ENCODE measurements at regions of chr7 and their contacts with region 1.

Region 1: DNA sequence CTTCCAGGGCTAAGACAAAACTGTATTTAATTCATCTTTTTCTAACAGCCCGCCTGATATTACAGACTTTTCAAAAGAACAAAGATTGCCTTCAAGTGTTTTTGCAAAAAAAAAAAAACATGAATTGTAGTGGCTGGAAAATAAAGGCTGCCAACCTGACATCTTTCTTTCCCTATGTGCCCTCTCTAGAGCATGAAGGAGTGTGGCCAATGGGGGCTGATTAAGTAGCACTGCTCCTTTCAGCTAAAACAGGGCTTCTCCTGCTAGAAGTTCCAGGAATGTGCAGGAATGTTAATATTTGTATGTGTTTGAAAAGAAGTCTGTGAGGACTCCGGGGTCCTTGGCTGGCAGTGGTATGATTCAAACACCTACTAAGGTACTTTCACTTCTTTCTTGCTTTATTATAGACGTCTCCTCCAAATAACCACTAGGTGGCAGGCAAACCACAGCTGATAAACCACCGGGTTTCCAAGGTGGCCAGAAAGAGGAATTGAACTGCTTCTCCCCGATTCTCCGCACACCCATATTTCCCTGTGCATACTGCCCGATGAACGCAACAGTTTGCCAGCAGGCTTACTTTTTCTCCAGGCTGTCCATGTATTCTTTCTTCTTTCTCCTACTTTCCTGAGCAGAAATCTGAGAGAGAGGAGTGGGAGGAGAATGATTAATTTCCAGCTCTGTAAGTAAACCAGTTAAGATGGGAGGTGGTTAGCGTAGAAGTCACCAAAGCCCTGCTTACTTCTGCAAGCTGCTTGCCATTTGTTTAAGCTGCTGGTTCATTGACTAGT is 56.8 kb upstream of the DGKI start:
- DNase-seq: peak; percentile 73
- H3K4me3 Mint-ChIP-seq: no peak overlapping the region
- H3K27ac Mint-ChIP-seq: peak overlapping the region; percentile 66
- H3K4me1 Mint-ChIP-seq: peaks cover 17% of the 10 kb centered on the region
- H3K27me3 Mint-ChIP-seq: no peaks in the 10 kb centered on the region

Region 2: GRCh38 chr7:137475966-137476365 is 427.6 kb before region 1 on chr7:
- CTCF ChIA-PET with region 1: no interaction called
- POLR2A ChIA-PET with region 1: no interaction called
- DNase-seq: no peak
- H3K4me3 Mint-ChIP-seq: no peak overlapping the region
- H3K27ac Mint-ChIP-seq: no peak overlapping the region
- H3K4me1 Mint-ChIP-seq: no peaks in the 10 kb centered on the region
- H3K27me3 Mint-ChIP-seq: no peaks in the 10 kb centered on the region

Region 3: DNA sequence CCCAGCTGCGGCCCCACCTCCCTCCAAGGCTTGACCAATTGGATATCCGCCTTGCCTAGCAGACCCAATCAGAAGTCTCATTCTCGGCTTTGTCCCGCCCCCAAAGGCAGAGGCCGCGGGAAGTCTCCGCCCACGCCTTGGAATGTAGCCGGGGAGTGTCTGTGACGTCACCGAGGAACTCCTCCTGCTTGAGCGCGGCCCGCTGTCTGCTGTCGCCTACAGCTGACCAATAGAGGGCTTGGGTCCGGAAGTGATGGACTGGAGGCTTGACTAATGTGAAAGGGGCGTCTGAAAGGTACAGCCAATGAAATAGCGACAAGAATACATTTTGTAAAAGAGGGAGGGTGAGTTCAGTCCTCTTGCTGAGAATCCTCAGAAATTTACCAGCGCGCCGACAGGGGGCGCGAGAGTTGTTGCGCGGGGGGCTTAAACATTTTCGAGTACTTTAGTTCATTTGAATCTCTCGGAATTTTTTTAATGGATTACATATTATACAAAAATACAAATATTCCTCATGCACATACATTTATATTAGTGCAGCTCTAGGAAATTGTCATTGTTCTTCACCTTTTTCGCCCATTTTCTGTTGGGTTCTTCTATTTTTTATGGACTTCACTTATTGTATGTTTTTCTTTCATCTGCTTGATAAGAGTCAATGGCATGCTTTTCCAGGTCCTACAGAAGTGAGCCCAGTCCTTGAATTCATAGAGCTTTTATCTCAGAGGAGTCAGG is 98.7 kb after region 1 on chr7:
- CTCF ChIA-PET with region 1: interaction called, 43 read pairs
- POLR2A ChIA-PET with region 1: no interaction called
- DNase-seq: peak; percentile 98
- H3K4me3 Mint-ChIP-seq: peak overlapping the region; percentile 92
- H3K27ac Mint-ChIP-seq: peak overlapping the region; percentile 95
- H3K4me1 Mint-ChIP-seq: peaks cover 40% of the 10 kb centered on the region
- H3K27me3 Mint-ChIP-seq: no peaks in the 10 kb centered on the region

Region 4: DNA sequence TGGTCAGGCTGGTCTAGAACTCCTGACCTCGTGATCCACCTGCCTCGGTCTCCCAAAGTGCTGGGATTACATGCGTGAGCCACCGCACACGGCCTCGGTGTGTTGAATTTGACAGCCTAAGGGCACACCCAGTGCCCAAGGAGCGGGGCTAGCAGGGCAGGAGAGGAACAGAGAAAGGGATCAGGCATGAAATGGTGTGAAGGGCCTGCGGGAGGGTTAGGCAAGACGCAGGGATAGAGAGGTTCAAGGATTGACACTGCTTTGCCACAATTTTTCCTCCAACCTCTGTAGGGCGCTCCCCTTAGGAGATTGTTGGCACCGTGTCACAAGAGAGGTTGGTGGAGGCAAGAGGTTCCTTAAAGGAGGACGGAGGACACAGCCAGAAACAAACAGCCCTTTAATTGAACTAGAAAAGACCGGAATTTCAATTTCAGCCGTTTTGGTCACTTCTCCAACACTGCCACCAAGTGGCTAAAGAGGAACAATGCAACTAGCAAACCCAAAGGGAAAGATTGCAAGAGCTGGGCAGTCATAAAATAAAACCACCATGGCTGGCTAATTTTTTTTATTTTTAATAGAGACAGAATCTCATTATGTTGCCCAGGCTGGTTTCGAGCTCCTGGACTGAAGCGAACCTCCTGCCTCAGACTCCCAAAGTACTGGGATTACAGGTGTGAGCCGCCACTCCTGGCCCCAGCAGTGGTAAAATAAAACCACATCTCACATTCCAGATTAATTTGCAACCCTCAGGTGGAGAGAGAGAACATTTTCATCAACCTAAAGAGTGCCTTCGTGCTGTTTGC is 105.2 kb after region 1 on chr7:
- CTCF ChIA-PET with region 1: interaction called, 43 read pairs
- POLR2A ChIA-PET with region 1: no interaction called
- DNase-seq: peak; percentile 43
- H3K4me3 Mint-ChIP-seq: no peak overlapping the region
- H3K27ac Mint-ChIP-seq: no peak overlapping the region
- H3K4me1 Mint-ChIP-seq: peaks cover 9% of the 10 kb centered on the region
- H3K27me3 Mint-ChIP-seq: peaks cover 4% of the 10 kb centered on the region

Region 5: GRCh38 chr7:138388673-138389491 is 485.3 kb after region 1 on chr7:
- CTCF ChIA-PET with region 1: no interaction called
- POLR2A ChIA-PET with region 1: no interaction called
- DNase-seq: no peak
- H3K4me3 Mint-ChIP-seq: no peak overlapping the region
- H3K27ac Mint-ChIP-seq: no peak overlapping the region
- H3K4me1 Mint-ChIP-seq: no peaks in the 10 kb centered on the region
- H3K27me3 Mint-ChIP-seq: no peaks in the 10 kb centered on the region

Measured in activated CD4-positive, alpha-beta T cell treated with anti-CD3 and anti-CD28 coated beads, Interleukin-2, amount 10 ng/mL, durations not matched to agents 7 days and 5 days (primary cell).